A673 (cell line): ENCODE measurements at regions of chr5 and their contacts with region 1.

Region 1: DNA sequence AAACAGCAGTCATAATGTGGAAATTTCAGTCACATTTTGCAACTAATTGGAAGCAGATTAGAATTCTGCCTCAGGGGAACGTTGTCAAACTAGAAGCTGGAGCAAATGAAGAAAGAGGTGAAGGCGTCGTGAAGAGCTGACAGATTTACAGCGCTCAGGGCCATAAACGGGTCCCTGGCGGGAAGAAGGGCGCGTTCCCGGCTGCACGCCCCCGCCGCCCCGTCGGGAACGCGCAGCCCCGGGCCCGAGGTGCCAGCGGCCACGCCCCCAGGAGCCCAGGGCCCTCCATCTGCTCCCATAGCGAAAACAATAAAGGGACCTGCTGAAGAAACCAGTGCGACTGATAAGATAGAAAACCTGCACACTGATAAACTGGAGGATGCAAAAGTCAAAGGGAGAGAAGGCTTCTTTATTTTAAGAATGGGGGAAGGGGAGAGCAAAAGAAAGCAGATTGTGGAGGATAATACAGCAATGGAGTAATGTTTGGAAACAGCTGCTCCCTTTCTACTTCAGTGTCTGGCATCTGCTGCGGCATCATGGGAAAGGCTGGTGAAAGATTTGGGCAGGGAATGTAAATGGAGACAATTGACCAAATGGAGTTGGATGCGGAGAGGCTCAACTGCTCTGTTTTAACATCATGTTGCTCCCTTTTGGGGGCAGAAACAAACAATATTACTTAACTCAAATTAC is 11.1 kb downstream of the ZNF608 start:
- DNase-seq: peak; percentile 73
- H3K4me3 ChIP-seq: peak overlapping the region; percentile 23
- H3K27ac ChIP-seq: no peak overlapping the region
- H3K4me1 ChIP-seq: peaks cover 33% of the 10 kb centered on the region
- H3K27me3 ChIP-seq: peaks cover 7% of the 10 kb centered on the region
- CTCF ChIP-seq: no peak

Region 2: DNA sequence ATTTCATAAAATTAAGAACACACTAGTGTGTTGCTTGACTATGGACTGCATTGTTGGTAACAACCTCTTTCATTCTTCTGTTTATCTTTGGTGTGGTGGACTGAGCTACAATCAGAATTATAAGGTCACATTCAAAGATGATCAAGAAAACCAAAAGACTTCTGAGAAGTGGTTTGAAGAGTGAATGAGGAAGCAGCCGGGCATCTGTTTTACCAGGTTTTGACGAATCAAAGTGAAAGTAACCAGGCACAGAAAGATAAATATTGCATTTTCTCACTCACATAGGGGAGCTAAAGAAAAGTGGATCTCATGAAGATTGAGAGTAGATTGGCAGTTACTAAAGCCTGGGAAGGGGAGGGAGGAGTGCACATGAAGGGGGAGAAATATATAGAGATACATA is 578.0 kb before region 1 on chr5:
- CTCF ChIA-PET with region 1: no interaction called
- POLR2A ChIA-PET with region 1: no interaction called
- intact Hi-C with region 1: no loop called
- DNase-seq: no peak
- H3K4me3 ChIP-seq: no peak overlapping the region
- H3K27ac ChIP-seq: no peak overlapping the region
- H3K4me1 ChIP-seq: no peaks in the 10 kb centered on the region
- H3K27me3 ChIP-seq: no peaks in the 10 kb centered on the region
- CTCF ChIP-seq: no peak

Region 3: DNA sequence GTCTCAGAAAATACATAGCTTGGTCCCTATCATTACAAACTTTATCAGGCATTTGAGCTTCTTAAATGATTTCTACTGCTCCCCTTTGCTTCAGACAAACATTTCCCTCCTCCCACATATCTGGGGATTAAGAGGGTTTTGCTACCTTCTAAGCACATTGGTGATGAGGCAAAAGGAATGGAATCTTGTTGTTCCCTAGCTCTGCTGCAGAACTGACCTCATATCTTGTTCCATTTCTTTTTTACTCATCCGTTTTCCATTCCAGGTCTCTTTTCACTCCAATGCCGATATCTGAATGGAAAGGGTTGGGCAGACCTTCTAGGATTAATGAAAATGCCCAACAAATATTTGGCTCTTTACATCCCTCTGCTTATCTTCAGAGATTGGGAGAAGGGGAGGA is 433.5 kb before region 1 on chr5:
- CTCF ChIA-PET with region 1: no interaction called
- POLR2A ChIA-PET with region 1: no interaction called
- intact Hi-C with region 1: loop called (anchors 10 kb)
- DNase-seq: no peak
- H3K4me3 ChIP-seq: no peak overlapping the region
- H3K27ac ChIP-seq: no peak overlapping the region
- H3K4me1 ChIP-seq: peaks cover 4% of the 10 kb centered on the region
- H3K27me3 ChIP-seq: peaks cover 16% of the 10 kb centered on the region
- CTCF ChIP-seq: no peak

Region 4: DNA sequence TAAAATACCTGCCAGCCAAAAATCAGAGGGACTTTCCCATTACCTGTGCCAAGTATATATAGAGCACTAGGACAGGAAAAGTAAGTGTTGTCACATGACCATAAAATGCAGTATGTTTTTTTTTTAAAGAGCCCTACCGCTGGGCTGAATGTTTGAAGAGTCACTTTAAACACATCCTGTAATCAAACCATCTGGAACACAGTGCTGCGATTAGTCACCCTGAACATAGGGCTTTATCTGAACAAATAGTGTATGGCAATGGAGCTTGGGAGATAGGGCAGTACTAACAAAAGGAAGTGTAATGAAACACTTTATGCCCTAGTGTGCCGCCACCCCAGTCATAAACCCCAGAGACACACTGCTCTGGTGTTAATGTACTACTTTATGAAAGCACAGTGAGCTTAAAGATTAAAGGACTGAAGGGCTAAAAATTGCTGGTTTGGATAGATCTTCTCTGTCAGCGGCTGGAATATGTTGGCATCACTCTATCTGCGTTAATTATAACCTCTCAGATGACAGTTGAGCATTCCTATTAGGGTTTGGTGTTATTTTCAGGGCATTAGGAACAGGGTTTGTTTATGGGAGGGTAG is 79.3 kb before region 1 on chr5:
- CTCF ChIA-PET with region 1: no interaction called
- POLR2A ChIA-PET with region 1: no interaction called
- intact Hi-C with region 1: loop called (anchors 5 kb)
- DNase-seq: peak; percentile 75
- H3K4me3 ChIP-seq: no peak overlapping the region
- H3K27ac ChIP-seq: no peak overlapping the region
- H3K4me1 ChIP-seq: peaks cover 25% of the 10 kb centered on the region
- H3K27me3 ChIP-seq: no peaks in the 10 kb centered on the region
- CTCF ChIP-seq: no peak

Region 5: DNA sequence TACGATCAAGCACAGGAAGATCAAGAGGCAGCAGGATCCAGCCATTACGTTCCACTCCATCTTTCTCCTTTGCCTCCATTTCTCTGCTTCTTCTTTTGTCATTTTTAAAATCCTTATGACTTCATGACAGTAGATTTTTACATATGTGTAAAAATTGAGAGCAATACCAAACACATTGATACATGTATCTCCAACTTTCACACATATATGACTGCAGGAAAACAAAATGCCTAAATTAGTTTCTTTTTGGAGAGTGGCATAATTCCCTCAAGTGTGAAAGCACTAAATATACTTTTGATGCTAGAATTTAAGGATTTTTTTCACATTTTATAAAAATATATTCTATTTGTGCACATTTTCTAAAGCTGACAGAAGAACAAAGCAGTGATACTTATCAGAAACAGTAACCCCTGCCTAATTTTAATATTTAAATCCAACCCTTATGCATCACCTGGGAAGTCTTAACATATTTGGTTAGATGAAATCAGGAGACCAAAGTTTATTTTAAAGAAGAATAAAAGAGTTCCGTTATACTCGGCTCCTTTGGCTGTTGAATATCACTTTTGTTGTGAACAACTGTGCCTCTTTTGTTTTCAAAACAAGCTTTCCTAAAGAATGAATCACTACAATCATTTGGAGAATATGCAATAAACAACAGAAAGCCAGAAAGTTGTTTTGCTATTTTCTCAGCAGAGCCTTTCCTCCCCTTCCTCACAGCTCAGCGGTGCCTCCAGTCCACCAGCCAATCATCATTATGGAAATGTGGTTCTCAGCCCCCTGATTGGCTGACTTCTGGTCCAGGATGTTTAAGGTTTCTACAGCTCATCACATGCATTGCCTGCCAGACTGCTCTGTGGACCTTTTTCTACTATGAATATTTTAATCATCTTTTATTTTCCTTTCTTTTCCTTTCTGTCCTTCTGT is 20.0 kb after region 1 on chr5:
- CTCF ChIA-PET with region 1: no interaction called
- POLR2A ChIA-PET with region 1: no interaction called
- intact Hi-C with region 1: no loop called
- DNase-seq: peak; percentile 45
- H3K4me3 ChIP-seq: no peak overlapping the region
- H3K27ac ChIP-seq: no peak overlapping the region
- H3K4me1 ChIP-seq: no peaks in the 10 kb centered on the region
- H3K27me3 ChIP-seq: no peaks in the 10 kb centered on the region
- CTCF ChIP-seq: no peak